Left colon (tissue), 2 donors: ENCODE measurements at regions of chr11 and their contacts with region 1.

Region 1: GRCh38 chr11:2526808-2527381 is 82.1 kb downstream of the KCNQ1 start:
- DNase-seq: peak; percentile 87
- ATAC-seq: peak; percentile 81

Region 2: DNA sequence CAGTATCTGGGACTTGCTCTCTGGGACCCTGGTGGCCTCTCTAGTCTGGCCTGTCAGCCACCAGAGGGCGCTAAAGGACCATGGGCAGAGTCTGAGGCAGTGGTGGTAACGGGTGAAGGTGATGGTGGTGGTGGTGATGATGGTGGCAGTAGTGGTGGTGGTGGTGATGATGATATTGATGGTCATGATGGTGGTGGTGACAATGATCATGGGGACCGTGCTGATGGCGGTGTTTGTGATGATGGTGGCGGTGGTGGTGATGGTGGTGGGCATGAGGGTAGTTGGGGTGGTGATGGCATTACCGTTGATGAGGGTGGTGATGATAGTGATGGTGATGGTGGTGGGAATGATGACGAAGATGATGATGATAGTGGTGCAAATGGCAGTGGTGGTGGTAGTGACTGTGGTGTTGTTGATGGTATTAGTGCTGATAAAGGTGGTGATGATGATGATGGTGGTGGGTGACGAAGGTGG is 98.5 kb before region 1 on chr11:
- intact Hi-C with region 1: loop called (anchors 5 kb)
- DNase-seq: peak; percentile 69 to 93
- ATAC-seq: peak; percentile 73

Region 3: GRCh38 chr11:3000082-3000961 is 473.4 kb after region 1 on chr11:
- intact Hi-C with region 1: no loop called
- DNase-seq: peak; percentile 69
- ATAC-seq: peak; percentile 41